PC-3 (cell line): ENCODE measurements at regions of chr4 and their contacts with region 1.

Region 1: GRCh38 chr4:183471946-183472708 is 27.7 kb downstream of the CDKN2AIP start:
- DNase-seq: peak; percentile 86
- ATAC-seq: peak; percentile 57
- H3K4me3 ChIP-seq: no peak overlapping the region
- H3K27ac ChIP-seq: no peak overlapping the region
- H3K4me1 ChIP-seq: peaks cover 31% of the 10 kb centered on the region
- H3K27me3 ChIP-seq: no peaks in the 10 kb centered on the region
- CTCF ChIP-seq: peak; percentile 86

Region 2: GRCh38 chr4:183444214-183445066 is 27.7 kb before region 1 on chr4 and contains the start of gene CDKN2AIP:
- CTCF ChIA-PET with region 1: no interaction called
- POLR2A ChIA-PET with region 1: no interaction called
- intact Hi-C with region 1: loop called (anchors 1 kb)
- DNase-seq: peak; percentile 92
- ATAC-seq: peak; percentile 88
- H3K4me3 ChIP-seq: peak within 1 kb of the TSS; percentile 83
- H3K27ac ChIP-seq: peak within 1 kb of the TSS; percentile 97
- H3K4me1 ChIP-seq: peaks cover 45% of the 10 kb centered on the region
- H3K27me3 ChIP-seq: no peaks in the 10 kb centered on the region
- CTCF ChIP-seq: no peak
- total RNA-seq, gene CDKN2AIP: 21.2 and 31.5 TPM in 2 replicates

Region 3: GRCh38 chr4:183485401-183486160 is 13.5 kb after region 1 on chr4:
- CTCF ChIA-PET with region 1: no interaction called
- POLR2A ChIA-PET with region 1: no interaction called
- intact Hi-C with region 1: no loop called
- DNase-seq: peak; percentile 44
- ATAC-seq: no peak
- H3K4me3 ChIP-seq: no peak overlapping the region
- H3K27ac ChIP-seq: peak overlapping the region; percentile 30; the same call in 1 of the 2 replicates
- H3K4me1 ChIP-seq: peaks cover 4% of the 10 kb centered on the region; the same call in 1 of the 2 replicates
- H3K27me3 ChIP-seq: no peaks in the 10 kb centered on the region
- CTCF ChIP-seq: no peak

Region 4: GRCh38 chr4:183504064-183504929 is 32.2 kb after region 1 on chr4:
- CTCF ChIA-PET with region 1: no interaction called
- POLR2A ChIA-PET with region 1: no interaction called
- intact Hi-C with region 1: loop called (anchors 1 kb)
- DNase-seq: peak; percentile 95
- ATAC-seq: peak; percentile 75
- H3K4me3 ChIP-seq: peak overlapping the region; percentile 93
- H3K27ac ChIP-seq: peak overlapping the region; percentile 65
- H3K4me1 ChIP-seq: peaks cover 14% of the 10 kb centered on the region
- H3K27me3 ChIP-seq: no peaks in the 10 kb centered on the region
- CTCF ChIP-seq: no peak

Region 5: DNA sequence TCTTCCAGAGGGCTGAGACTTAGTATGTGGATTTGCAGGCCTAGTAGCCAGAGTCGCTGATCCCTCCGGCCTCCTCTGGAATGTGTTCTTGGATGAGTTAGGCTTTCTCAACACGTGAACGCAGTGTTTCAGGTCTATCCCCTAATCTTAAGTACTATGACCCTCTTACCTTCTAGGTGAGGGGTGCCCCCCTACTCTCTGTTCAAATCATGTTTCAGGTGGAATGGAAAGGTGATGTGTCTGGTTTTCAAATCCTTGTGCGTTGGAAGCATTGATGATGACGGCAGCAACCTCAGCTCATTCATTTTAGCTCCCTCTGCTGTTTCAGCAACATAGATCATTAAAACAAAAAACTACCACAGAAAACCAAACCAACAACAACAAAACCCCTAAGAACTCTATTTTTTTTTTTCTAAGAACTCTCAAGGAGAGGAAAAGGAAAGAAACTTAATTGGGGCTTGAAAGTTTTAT is 130.5 kb after region 1 on chr4:
- CTCF ChIA-PET with region 1: no interaction called
- POLR2A ChIA-PET with region 1: no interaction called
- intact Hi-C with region 1: loop called (anchors 1 kb)
- DNase-seq: no peak
- ATAC-seq: no peak
- H3K4me3 ChIP-seq: no peak overlapping the region
- H3K27ac ChIP-seq: no peak overlapping the region
- H3K4me1 ChIP-seq: 0 out of 2 replicates have a peak, but pooled peaks cover under 1% of the 10 kb centered on the region
- H3K27me3 ChIP-seq: no peaks in the 10 kb centered on the region
- CTCF ChIP-seq: peak; percentile 47; the same call in 1 of the 2 replicates

Region 6: DNA sequence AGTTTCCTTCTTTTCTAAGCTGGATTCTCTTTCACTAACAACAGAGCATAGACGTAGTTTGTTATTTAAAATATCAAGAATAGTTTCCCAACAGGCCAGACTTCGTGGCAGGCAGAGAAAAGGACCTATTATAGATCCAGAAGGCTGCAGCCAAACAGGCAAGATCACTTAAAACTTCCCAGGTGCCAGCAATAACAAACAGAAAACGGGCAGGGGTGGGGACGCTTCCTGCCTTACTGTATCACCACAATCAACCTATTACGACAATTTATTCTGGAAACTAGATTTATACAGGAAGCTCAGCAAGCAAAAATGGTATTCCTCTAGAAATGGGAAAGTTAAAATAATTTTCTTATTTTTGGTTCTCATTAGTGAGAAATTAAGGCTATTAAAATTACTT is 164.8 kb after region 1 on chr4:
- CTCF ChIA-PET with region 1: no interaction called
- POLR2A ChIA-PET with region 1: no interaction called
- intact Hi-C with region 1: loop called (anchors 5 kb)
- DNase-seq: peak; percentile 49
- ATAC-seq: peak; percentile 83
- H3K4me3 ChIP-seq: peak overlapping the region; percentile 36
- H3K27ac ChIP-seq: peak overlapping the region; percentile 71
- H3K4me1 ChIP-seq: peaks cover 26% of the 10 kb centered on the region
- H3K27me3 ChIP-seq: no peaks in the 10 kb centered on the region
- CTCF ChIP-seq: no peak

Region 7: DNA sequence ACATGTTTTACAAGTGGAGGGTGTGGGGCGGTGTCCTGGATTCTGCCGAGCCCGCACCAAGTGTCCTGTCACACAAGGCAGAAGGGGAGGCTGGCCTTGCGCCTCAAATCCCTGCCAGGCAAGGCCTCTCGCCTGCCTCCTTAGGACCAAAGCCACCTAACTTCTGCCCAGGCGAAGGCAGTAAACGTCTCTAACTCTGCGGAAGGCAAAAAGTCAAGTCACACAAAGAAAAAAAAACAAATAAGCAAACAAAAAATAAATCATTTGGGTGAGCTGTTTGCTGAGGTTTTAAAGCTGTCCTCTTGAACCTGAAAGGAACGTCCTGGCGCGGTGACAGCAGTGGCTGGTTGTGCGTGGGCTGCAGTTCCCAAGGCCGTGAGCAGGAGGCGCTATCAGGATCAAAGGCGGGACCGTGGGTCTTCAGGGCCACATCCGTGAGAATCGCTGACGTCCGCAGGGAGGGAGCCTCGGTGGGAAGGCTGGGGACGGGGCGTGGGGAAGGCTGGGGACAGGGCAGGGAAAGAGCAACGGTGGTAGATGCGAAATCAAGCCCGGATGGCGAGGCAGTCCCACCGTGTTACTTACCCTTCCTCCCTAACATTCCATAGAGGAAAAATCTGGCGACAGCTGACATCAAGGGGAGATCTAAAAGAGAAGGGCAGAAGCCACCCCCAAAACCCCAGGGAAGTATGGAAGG is 286.1 kb after region 1 on chr4:
- CTCF ChIA-PET with region 1: no interaction called
- POLR2A ChIA-PET with region 1: no interaction called
- intact Hi-C with region 1: loop called (anchors 10 kb)
- DNase-seq: peak; percentile 46
- ATAC-seq: peak; percentile 16
- H3K4me3 ChIP-seq: no peak overlapping the region
- H3K27ac ChIP-seq: peak overlapping the region; percentile 50
- H3K4me1 ChIP-seq: peaks cover 26% of the 10 kb centered on the region
- H3K27me3 ChIP-seq: no peaks in the 10 kb centered on the region
- CTCF ChIP-seq: peak; percentile 63

Region 8: GRCh38 chr4:184168406-184169019 is 696.4 kb after region 1 on chr4:
- CTCF ChIA-PET with region 1: no interaction called
- POLR2A ChIA-PET with region 1: no interaction called
- intact Hi-C with region 1: loop called (anchors 5 kb)
- DNase-seq: peak; percentile 67
- ATAC-seq: peak; percentile 98
- H3K4me3 ChIP-seq: peak overlapping the region; percentile 61
- H3K27ac ChIP-seq: no peak overlapping the region
- H3K4me1 ChIP-seq: no peaks in the 10 kb centered on the region; the same call in 1 of the 2 replicates
- H3K27me3 ChIP-seq: peaks cover 10% of the 10 kb centered on the region; the same call in 1 of the 2 replicates
- CTCF ChIP-seq: peak; percentile 81